ENCODE measurements at regions of chr1 and their contacts with region 1.

Region 1: DNA sequence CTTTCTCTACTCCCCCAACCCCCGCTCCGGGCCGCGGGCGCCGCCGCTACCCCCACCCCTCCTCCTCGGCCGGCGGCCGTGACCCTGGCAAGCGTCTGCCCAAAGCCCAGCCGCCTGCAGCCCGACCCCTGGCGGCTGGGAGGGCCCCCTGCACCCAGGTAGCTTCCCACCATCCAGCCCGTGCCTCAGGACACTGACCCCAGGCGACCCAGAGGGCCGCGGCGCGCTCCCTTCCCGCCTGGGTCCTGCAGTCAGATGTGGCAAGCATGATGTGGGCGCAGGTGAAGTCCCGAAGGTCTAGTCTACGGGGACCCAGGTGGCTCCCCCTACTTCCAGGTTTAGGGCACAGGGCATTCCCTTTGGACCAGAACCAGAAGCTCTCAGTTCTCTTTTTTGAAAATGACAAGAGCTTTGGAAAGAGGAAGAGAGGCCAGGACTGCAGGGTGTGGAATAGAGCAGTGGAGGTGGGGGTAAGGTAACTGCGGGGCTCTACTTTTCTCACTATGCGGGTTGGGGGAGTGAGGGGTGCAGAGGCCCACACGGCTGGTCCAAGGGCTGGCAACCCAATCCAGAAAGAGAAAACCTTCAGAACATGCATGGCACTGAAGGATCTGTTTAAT is at the start of gene DENND4B:
- DNase-seq: peak; percentile 43 to 87 (median 75)
- ATAC-seq: peak; percentile 61
- H3K4me3 ChIP-seq: peak within 1 kb of the TSS; percentile 71 to 84
- H3K4me3 Mint-ChIP-seq: peak within 1 kb of the TSS; percentile 94
- H3K27ac ChIP-seq: peak within 1 kb of the TSS; percentile 81 to 95
- H3K27ac Mint-ChIP-seq: peak within 1 kb of the TSS; percentile 86
- H3K4me1 ChIP-seq: peaks cover 33% of the 10 kb centered on the region
- H3K4me1 Mint-ChIP-seq: peaks cover 25% of the 10 kb centered on the region
- H3K27me3 ChIP-seq: no peaks in the 10 kb centered on the region
- H3K27me3 Mint-ChIP-seq: no peaks in the 10 kb centered on the region
- CTCF ChIP-seq: peak; percentile 95
- total RNA-seq, gene DENND4B: 87.2 to 91.3 TPM

Region 2: DNA sequence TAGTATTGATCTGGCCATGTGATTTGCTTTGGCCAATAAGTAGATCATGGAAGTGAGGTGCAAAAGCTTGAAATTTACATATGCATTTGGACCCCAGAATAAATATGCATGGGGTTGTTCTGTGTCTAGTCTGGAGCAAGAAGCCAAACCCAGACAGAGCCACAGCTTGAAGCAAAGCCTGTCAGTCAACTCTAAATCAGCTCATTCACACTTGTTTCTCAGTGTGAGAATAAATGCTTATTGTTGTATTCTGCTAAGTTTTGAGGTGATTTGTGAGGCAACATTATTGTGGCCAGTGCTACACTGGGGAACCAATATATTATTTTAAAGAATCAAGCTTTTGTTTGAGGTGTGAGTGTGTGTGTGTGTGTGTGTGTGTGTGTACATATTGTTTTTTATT is 621.8 kb before region 1 on chr1:
- CTCF ChIA-PET with region 1: no interaction called
- POLR2A ChIA-PET with region 1: no interaction called
- intact Hi-C with region 1: no loop called
- DNase-seq: no peak
- ATAC-seq: no peak
- H3K4me3 ChIP-seq: no peak overlapping the region
- H3K4me3 Mint-ChIP-seq: no peak overlapping the region
- H3K27ac ChIP-seq: no peak overlapping the region
- H3K27ac Mint-ChIP-seq: no peak overlapping the region
- H3K4me1 ChIP-seq: no peaks in the 10 kb centered on the region
- H3K4me1 Mint-ChIP-seq: no peaks in the 10 kb centered on the region
- H3K27me3 ChIP-seq: peaks cover 0 to 2% of the 10 kb centered on the region in 2 experiments
- H3K27me3 Mint-ChIP-seq: peaks cover 11% of the 10 kb centered on the region
- CTCF ChIP-seq: no peak

Region 3: DNA sequence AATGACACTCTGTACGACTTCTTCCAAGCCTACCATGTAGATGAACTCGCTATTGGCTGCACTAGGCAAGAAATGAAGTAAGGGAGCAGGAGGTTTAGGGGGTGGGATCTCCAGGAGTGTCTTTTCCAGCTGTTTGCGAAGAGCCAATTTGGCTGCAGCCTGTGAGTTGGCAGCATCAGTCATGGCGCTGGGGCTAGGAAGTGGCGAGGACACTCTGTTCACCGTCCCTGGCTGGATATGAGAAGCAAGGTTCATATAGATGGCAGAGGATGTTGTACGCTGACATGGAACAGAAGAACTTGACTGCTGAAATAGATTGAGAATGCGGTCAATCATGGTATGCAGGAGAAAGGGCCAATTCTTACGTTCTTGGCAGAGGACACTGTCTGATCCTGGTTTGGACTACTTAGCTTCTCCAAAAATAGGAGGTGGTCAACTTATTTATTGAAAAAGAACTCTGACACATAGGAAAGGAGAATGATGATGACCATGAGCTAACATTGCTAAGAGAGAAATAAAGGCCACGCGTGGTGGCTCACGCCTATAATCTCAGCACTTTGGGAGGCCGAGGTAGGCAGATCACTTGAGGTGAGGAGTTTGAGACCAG is 130.3 kb before region 1 on chr1:
- CTCF ChIA-PET with region 1: interaction called, 5 read pairs
- POLR2A ChIA-PET with region 1: no interaction called
- intact Hi-C with region 1: loop called in 1 of 2 experiments (anchors 1 kb)
- DNase-seq: no peak
- ATAC-seq: no peak
- H3K4me3 ChIP-seq: no peak overlapping the region
- H3K4me3 Mint-ChIP-seq: no peak overlapping the region
- H3K27ac ChIP-seq: no peak overlapping the region
- H3K27ac Mint-ChIP-seq: no peak overlapping the region
- H3K4me1 ChIP-seq: no peaks in the 10 kb centered on the region
- H3K4me1 Mint-ChIP-seq: no peaks in the 10 kb centered on the region
- H3K27me3 ChIP-seq: no peaks in the 10 kb centered on the region
- H3K27me3 Mint-ChIP-seq: no peaks in the 10 kb centered on the region
- CTCF ChIP-seq: no peak

Region 4: DNA sequence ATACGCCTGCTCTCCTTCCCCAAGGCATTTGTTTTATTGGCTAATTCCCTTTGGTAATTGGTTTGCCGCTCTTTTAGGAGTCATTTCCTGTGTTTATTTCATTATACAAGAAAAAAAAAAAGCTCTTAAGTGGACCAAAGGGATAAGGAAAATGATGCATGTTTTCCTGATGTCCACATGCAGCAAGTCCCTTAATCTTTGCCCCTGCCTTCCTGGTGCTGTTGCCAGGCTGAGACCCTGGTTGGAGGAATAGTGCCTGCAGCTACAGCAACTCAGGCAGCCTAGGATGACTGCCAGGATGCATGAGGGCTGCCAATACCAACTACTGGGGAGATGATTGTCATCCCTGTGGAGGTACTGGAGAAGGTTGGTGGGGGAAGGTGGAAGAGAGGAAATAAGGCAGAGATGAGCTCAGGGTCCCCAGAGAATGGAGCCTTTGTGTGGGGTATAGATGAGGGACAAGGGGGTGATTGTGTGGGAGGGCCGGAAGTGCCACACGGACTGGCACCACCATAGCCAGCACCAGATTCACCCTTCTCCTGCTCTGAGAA is 17.9 kb before region 1 on chr1:
- CTCF ChIA-PET with region 1: interaction called, 40 read pairs
- POLR2A ChIA-PET with region 1: interaction called, 57 read pairs
- intact Hi-C with region 1: no loop called
- DNase-seq: no peak
- ATAC-seq: no peak
- H3K4me3 ChIP-seq: no peak overlapping the region
- H3K4me3 Mint-ChIP-seq: no peak overlapping the region
- H3K27ac ChIP-seq: peak overlapping the region in 1 of 2 experiments; percentile 24
- H3K27ac Mint-ChIP-seq: peak overlapping the region; percentile 60
- H3K4me1 ChIP-seq: peaks cover 12% of the 10 kb centered on the region
- H3K4me1 Mint-ChIP-seq: peaks cover 10% of the 10 kb centered on the region
- H3K27me3 ChIP-seq: no peaks in the 10 kb centered on the region
- H3K27me3 Mint-ChIP-seq: no peaks in the 10 kb centered on the region
- CTCF ChIP-seq: no peak

Region 5: GRCh38 chr1:153967082-153968000 is 20.6 kb after region 1 on chr1 and contains the start of gene CREB3L4:
- CTCF ChIA-PET with region 1: interaction called, 29 read pairs
- POLR2A ChIA-PET with region 1: interaction called, 50 read pairs
- intact Hi-C with region 1: no loop called
- DNase-seq: peak; percentile 62 to 97 (median 81)
- ATAC-seq: peak; percentile 84
- H3K4me3 ChIP-seq: peak within 1 kb of the TSS; percentile 77 to 79
- H3K4me3 Mint-ChIP-seq: peak within 1 kb of the TSS; percentile 86
- H3K27ac ChIP-seq: peak within 1 kb of the TSS; percentile 66 to 78
- H3K27ac Mint-ChIP-seq: peak within 1 kb of the TSS; percentile 95
- H3K4me1 ChIP-seq: peaks cover 41% of the 10 kb centered on the region
- H3K4me1 Mint-ChIP-seq: peaks cover 51% of the 10 kb centered on the region
- H3K27me3 ChIP-seq: no peaks in the 10 kb centered on the region
- H3K27me3 Mint-ChIP-seq: no peaks in the 10 kb centered on the region
- CTCF ChIP-seq: peak; percentile 15
- total RNA-seq, gene CREB3L4: 3.0 to 3.7 TPM

Region 6: DNA sequence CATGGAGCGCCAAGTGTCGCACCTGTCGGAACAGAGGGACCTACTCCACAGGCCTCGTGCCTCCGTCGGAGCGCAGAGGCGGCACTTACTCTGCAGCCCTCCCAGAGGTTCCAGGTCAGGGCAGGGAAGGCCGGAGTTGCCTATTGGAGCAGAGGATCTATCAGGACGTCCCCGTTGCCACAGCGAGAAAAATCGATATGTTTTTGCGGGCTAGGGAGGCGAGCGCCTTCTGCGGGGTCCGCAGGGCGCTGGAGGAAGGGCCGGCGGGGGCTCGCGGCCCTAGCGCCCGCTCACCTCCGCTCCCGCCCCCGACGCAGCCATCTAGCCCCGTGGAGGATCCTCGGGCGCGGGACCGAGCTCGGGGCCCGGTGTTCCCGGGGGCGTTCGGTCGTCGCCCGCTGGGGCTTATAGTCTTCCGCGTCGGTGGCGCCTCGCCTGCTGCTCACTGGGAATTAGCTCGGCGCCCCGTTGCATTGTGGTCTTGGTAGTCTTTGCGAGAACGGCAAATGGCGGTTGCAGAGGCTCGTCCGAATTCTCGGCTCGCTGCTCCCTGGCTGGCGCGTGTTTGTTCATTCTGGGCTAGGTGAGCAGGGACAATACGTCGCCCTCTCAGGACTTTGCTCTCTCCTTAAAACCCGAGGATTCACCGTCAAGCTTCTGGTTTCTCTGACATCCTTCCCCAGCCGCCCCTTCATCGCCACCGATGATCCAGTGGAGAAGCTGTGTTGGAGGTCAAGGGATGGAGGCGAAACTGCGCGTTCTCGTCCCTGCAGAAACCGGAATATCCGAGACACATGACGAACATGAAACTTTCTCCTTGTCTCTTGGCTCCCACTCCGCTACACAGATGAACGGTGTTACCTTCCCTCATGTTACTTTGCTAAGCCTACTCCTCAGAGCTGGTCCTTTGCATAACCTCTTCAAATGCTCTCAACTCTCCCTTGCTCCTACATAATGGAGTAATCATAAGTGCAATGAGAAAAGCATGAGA is 30.8 kb after region 1 on chr1 and contains the start of gene JTB:
- CTCF ChIA-PET with region 1: interaction called, 8 read pairs
- POLR2A ChIA-PET with region 1: interaction called, 35 read pairs
- intact Hi-C with region 1: loop called in 1 of 2 experiments (anchors 1 kb)
- DNase-seq: peak; percentile 62 to 91 (median 86)
- ATAC-seq: peak; percentile 95
- H3K4me3 ChIP-seq: peak within 1 kb of the TSS; percentile 92 to 97
- H3K4me3 Mint-ChIP-seq: peak within 1 kb of the TSS; percentile 97
- H3K27ac ChIP-seq: peak within 1 kb of the TSS; percentile 74 to 77
- H3K27ac Mint-ChIP-seq: peak within 1 kb of the TSS; percentile 96
- H3K4me1 ChIP-seq: peaks cover 20% of the 10 kb centered on the region
- H3K4me1 Mint-ChIP-seq: peaks cover 35% of the 10 kb centered on the region
- H3K27me3 ChIP-seq: no peaks in the 10 kb centered on the region
- H3K27me3 Mint-ChIP-seq: no peaks in the 10 kb centered on the region
- CTCF ChIP-seq: no peak
- total RNA-seq, gene JTB: 90.4 to 91.1 TPM